ENCODE measurements at regions of chrX and their contacts with region 1.

Region 1: GRCh38 chrX:17046478-17047097 is 100.1 kb downstream of the REPS2 start:
- H3K4me3 Mint-ChIP-seq: no peak overlapping the region
- H3K27ac Mint-ChIP-seq: no peak overlapping the region
- H3K4me1 Mint-ChIP-seq: no peaks in the 10 kb centered on the region
- H3K27me3 Mint-ChIP-seq: no peaks in the 10 kb centered on the region

Region 2: DNA sequence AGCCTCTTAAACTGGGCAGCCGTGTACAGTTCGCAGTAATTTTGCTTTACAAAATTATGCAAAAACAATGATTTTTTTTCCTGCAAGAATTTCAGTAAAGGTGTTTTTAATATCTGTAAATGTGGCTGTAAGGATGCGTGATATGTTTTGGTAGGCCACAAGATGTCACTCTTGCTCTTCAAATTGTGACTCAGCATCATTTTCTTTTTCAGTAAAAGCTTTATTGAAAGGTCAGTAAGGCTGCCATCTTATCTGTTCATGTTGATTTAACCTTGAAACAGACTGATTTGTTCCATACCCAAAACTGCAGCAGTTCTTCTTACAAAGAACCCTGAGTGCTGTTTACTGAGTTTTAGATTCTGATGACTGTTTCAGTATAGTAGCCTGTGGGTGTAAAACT is 220.4 kb before region 1 on chrX:
- intact Hi-C with region 1: loop called (anchors 2 kb)
- H3K4me3 Mint-ChIP-seq: no peak overlapping the region
- H3K27ac Mint-ChIP-seq: no peak overlapping the region
- H3K4me1 Mint-ChIP-seq: no peaks in the 10 kb centered on the region
- H3K27me3 Mint-ChIP-seq: no peaks in the 10 kb centered on the region

Region 3: DNA sequence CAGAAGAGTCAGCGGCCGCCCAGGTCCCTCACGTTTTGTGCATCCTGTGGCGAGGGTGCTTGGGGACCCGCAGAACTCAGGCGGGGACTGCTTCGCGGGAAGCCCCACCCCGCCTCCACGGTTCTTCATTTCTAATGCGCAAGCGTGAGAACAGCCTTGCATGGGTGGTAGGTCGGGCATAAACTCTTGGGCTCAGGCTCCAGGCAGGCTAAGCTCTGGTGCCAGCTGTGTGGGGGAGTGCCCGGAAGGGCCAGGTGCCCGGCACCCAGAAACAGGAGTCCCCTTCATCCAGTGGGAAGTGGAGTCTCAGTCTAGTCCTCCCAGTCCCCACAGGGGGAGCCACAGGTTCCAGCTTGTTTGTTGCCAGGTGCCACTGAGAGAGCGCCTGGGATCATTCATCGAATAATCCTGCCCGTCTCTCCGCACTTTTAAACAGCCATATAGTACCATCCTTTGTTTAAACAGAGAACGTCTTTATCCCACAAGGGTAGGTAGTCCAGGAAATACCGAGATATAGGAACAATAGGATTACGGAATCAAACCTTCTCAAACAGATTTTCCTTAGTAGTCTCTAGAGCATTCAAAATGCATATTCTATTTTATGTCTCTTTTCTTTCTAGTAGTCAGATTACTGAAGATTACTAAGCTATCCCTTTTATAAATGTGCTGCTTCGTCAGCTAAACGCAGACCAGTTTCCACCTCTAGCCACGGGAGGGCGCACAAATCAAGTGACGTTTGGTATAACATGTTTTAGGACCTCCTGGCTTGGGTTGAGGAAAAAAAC is 163.7 kb before region 1 on chrX:
- intact Hi-C with region 1: loop called (anchors 1 kb)
- H3K4me3 Mint-ChIP-seq: peak overlapping the region; percentile 74
- H3K27ac Mint-ChIP-seq: peak overlapping the region; percentile 75
- H3K4me1 Mint-ChIP-seq: peaks cover 6% of the 10 kb centered on the region
- H3K27me3 Mint-ChIP-seq: no peaks in the 10 kb centered on the region

Region 4: GRCh38 chrX:17007206-17007683 is 39.3 kb before region 1 on chrX:
- intact Hi-C with region 1: loop called (anchors 5 kb)
- H3K4me3 Mint-ChIP-seq: no peak overlapping the region
- H3K27ac Mint-ChIP-seq: no peak overlapping the region
- H3K4me1 Mint-ChIP-seq: peaks cover 16% of the 10 kb centered on the region
- H3K27me3 Mint-ChIP-seq: no peaks in the 10 kb centered on the region